Activated CD4-positive, alpha-beta memory T cell treated with anti-CD3 and anti-CD28 coated beads for 36 hours (primary cell): ENCODE measurements at regions of chr4 and their contacts with region 1.

Region 1: DNA sequence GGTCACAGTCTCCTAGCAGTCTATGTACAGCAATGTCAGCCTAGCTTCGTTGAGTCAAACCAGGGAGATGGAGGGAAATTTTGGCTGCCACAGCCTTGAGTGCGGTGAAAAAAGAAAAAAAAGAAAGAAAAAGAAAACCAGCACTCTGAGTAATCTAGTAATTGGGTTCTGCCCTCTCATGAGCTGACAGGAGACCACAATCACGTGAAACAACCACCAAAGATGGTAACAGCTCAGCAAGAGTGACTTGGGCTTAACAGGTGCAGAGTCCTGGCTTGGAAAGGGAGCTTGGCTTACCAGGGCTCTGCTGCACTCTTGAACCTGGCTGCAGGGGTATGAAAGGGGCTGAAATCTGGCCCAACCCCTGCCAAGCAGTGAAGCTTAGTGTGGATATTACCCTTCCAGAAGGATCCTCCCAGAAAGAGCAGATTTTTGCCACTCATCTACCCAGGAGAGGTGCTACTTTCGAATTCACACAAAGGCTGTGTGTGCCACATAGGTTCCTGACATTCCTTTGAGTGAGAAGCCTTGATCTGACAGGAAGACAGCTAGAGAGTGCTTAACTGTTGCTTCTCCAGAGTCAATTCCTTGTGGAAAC is 350.3 kb downstream of the PTTG2 start:
- DNase-seq: peak; percentile 86
- H3K4me3 Mint-ChIP-seq: peak overlapping the region; percentile 12
- H3K27ac Mint-ChIP-seq: peak overlapping the region; percentile 72
- H3K4me1 Mint-ChIP-seq: peaks cover 68% of the 10 kb centered on the region
- H3K27me3 Mint-ChIP-seq: peaks cover 15% of the 10 kb centered on the region

Region 2: DNA sequence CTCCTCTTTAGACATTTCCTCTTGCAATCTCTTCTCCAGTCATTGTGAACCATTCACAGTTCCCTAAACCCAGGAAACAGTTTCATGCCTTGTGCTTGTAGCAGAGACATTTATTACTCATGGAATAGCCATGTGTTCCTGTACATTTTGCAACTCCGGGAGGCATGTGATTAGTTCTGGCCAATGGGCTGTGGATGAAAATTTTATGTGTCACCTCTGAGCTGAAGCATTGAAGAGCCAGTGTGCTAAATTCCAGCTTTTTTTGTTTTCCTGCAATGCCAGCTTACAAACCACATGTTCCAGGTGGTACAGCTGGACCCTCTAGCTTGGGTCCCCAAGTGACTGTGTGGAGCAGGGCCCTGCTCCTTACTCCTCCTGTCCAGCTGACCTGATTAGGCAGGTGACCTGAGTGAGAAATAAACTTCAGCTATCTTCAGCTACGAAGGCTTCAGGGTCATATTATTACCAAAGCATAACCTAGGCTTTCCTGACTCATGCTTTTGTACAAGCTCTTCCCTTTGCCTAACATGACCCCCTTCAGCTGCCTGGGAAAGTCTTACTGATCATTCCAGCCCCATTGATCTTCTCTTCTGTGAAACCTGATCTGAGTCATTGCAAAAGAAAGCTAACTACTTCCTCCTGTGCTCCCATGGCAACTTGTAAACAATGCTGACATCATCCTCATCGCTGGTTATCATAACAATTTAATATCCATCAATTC is 149.9 kb before region 1 on chr4:
- CTCF ChIA-PET with region 1: no interaction called
- POLR2A ChIA-PET with region 1: interaction called, 6 read pairs
- intact Hi-C with region 1: loop called (anchors 1 kb)
- DNase-seq: peak; percentile 75
- H3K4me3 Mint-ChIP-seq: peak overlapping the region; percentile 10
- H3K27ac Mint-ChIP-seq: peak overlapping the region; percentile 68
- H3K4me1 Mint-ChIP-seq: peaks cover 74% of the 10 kb centered on the region
- H3K27me3 Mint-ChIP-seq: no peaks in the 10 kb centered on the region

Region 3: DNA sequence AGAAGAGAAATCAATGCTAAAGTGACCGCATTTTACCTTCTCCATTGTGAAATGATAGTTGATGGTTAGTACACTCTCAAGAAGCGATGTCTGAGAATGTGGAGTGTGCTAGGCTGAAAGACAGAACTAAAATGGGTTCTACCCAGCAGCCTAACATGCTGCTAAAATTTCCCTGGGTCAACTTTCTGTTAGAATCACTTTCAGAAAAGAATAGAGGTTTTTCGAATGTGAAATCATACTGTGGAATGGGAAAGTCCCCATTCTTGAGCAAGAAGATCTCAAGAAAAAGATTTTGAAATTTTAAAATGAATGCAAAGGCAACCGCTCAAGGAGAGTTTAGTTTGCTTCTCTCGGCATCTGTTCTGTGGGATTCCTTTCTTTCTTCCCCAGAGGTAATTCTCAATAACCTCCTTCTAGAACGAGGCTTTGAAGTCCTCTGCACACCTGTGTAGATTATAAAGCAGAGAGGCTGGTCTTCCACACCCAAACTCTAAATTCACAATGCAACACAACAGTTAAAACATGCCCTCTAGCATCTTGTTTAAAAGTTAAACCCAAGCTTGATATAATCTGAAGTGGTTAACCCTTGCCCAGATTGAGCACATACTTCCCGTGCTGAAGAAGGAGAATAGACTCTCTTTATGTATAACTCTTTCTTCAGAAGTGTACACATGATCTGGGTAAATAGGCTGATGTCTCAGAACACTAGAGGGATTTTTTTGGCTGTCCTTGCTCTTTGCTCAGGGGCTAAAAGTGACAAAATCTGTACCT is 144.7 kb after region 1 on chr4:
- CTCF ChIA-PET with region 1: no interaction called
- POLR2A ChIA-PET with region 1: no interaction called
- intact Hi-C with region 1: loop called (anchors 2 kb)
- DNase-seq: no peak
- H3K4me3 Mint-ChIP-seq: no peak overlapping the region
- H3K27ac Mint-ChIP-seq: peak overlapping the region; percentile 79
- H3K4me1 Mint-ChIP-seq: peaks cover 49% of the 10 kb centered on the region
- H3K27me3 Mint-ChIP-seq: peaks cover 15% of the 10 kb centered on the region

Region 4: GRCh38 chr4:38619996-38620789 is 309.6 kb after region 1 on chr4:
- CTCF ChIA-PET with region 1: interaction called, 3 read pairs
- POLR2A ChIA-PET with region 1: no interaction called
- intact Hi-C with region 1: loop called (anchors 2 kb)
- DNase-seq: no peak
- H3K4me3 Mint-ChIP-seq: no peak overlapping the region
- H3K27ac Mint-ChIP-seq: no peak overlapping the region
- H3K4me1 Mint-ChIP-seq: peaks cover 20% of the 10 kb centered on the region
- H3K27me3 Mint-ChIP-seq: no peaks in the 10 kb centered on the region

Region 5: DNA sequence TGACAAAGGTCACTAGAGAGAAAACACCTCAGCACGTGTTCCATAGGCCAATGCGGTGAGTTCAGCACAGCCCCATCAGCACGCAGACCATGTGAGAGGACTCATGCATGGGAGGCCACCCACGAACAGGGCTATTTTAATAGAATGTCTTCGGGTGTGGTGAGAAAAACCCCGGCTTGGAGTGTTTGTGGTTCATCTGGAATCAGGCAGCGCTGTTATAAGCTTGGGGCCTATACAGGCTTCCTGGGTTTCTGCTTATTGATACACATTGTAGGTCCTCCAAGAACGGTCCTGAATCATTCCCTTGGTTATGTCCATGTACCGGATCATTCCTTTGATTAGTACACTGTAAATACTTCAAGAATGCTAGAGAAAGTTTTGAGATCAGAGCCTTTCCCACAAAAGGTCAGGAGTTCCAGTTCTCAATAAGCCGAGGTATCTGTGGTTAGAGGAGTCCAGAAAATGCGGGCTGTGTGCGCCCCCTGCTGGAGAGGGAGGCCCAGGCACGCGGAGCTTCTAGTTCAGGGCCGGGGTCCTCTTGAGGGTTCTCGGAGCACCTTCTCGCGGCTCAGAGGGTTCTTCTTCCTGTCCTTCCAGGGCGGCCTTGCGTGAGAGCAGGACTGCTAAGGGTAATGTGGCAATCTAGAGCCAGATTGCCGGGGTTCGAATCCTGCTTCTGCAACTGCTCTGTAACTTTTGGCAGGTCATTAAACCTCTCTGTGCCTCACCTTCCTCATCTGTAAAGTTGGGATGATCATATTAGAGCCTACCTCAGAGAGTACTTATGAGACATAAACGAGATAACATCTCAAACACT is 420.5 kb after region 1 on chr4:
- CTCF ChIA-PET with region 1: interaction called, 5 read pairs
- POLR2A ChIA-PET with region 1: no interaction called
- intact Hi-C with region 1: loop called (anchors 2 kb)
- DNase-seq: peak; percentile 90
- H3K4me3 Mint-ChIP-seq: no peak overlapping the region
- H3K27ac Mint-ChIP-seq: no peak overlapping the region
- H3K4me1 Mint-ChIP-seq: peaks cover 14% of the 10 kb centered on the region
- H3K27me3 Mint-ChIP-seq: no peaks in the 10 kb centered on the region